Left cardiac atrium (tissue), 4 donors: ENCODE measurements at regions of chr1 and their contacts with region 1.

Region 1: DNA sequence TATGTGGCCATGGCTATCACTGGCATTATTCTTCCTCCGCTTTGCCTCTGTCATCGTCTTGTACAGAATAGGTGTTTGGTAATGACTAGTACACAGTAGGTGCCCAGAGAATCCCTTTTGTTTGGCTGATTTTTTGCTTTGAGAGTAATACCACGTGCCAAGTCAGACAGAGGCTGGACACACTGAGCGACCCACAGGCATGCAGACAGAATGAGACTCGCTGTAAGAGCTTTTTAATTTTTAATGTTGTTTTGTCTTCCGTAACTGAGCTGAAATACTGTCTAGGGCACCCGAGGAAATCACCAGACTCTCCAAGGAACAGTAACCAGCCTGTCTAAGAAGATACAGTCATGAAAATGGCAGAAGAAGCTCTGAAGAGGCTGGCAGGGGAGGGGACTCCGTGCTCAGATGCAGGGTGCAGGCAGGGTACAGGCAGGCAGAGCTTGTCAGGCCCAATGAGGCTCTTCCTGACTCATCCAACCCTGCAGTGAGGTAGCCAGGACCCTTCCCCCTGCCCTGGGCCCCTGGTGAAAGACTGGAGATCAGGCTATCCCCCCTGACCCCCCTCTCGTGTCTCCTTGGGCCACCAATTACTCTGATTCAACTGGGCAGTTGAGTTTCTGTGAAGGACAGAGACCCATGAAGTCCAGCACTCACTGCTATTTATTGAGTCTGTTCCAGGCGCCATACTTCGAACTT is 60.1 kb upstream of the ECE1 start:
- DNase-seq: no peak
- ATAC-seq: no peak

Region 2: DNA sequence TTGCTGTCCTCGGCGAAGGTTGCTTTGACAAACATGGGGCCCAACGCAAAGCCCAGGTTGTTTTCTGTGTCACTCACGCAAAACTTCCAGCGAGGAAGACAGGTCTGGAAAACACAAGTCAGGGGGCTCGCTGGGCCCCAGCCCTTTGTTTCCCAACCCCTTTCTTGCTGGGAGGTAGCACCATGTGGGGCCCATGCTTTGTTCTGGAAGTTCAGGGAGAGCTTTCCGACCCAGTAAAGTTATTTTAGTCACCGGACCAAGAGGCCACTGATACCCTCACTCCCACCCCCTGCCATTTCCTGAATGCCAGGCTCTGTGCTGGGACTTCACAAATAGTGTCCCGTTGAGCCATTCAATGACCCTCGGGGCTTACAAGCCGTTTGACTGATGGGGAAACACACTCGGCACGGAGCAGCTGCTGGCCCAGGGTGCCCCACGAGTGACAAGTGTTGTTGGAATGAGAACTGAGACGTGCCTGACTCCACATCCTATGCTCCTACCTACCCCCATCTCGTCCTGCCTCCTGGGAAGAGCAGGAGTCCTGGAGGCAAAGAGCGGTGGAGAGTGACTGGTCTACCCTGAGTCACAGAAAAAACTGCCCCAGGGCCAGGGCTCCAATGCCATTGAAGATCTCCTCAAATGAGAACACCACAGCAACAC is 112.1 kb before region 1 on chr1:
- intact Hi-C with region 1: loop called in 1 of 2 experiments (anchors 5 kb)
- DNase-seq: no peak
- ATAC-seq: peak in 1 of 2 donors; percentile 28

Region 3: DNA sequence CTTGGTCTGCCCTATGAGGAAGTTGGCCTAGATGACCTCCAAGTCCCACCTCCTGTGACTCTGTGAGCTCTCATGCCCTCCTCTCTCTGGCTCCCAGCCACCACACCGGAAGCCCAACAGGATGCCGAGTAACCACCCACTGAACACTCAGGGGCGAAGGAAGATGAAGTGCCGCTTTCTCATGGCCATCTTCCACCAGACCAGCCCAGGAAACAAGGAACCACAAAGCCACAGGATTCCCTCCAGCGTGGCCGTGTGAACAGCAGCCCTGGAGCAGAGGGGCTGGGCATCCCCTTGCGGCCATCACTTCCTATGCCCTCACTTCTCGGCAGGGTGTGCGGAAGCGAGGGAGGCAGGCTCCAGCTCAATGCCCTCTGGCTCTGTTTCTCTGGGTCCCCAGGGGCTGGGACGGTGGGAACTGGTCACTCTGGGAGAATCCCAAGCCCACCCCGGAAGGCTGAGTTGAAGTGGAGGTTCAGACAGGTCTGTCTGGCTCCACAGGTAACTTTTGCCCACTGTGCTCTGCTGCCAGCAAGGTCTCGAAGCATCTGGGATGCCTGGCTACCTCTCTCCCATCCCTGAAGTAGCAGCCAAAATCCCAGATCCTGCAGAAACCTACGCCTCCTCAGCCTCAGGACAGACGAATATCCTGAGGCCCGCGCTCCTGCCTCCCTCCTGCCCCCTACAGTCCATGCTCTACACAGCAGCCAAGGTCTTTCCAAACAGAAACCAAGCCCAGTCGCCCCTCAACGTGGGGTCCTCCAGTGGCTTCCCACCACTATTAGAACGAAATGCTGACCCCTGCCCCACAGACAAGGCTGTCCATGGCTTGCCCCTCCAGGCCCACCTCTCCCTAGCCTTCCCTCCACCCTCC is 15.9 kb before region 1 on chr1:
- intact Hi-C with region 1: no loop called
- DNase-seq: peak; percentile 86
- ATAC-seq: peak; percentile 32 to 46